ENCODE measurements at regions of chr6 and their contacts with region 1.

Region 1: GRCh38 chr6:71717035-71717434 is 169.3 kb upstream of the RIMS1 start:
- DNase-seq: no peak
- H3K4me3 ChIP-seq: no peak overlapping the region
- H3K27ac ChIP-seq: no peak overlapping the region
- H3K4me1 ChIP-seq: no peaks in the 10 kb centered on the region
- H3K27me3 ChIP-seq: no peaks in the 10 kb centered on the region
- CTCF ChIP-seq: no peak

Region 2: DNA sequence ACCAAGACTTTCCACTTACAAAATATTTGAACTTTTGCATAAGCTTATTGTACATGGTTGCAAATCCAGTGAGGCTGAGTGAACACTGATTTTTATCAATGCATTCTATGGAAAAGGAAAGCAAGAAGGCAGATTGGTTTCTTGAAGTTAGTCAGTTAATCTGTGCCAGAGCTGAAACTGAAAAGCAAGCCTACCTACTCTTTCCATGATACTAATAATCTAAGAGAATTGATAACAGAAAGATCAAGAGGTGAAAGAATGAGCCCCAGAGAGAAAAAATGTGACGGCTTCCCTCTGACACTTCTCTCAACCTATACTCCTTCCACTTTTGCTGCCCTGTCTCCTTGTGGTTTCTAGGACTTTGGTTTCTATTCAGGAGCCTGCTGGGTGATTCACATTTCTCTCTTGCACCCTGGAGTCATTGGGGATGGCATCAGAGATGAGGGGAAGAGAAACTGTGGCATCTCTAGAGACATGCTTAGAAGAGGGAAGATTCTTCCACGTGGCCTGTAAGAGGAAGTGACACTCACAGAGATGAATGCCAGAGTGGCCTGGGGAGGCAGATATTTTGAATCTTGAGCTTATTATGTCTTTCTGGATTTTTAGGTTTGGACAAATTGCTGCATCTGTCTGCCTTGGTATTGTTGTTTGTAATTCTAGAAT is 10.7 kb after region 1 on chr6:
- CTCF ChIA-PET with region 1: no interaction called
- POLR2A ChIA-PET with region 1: interaction called, 14 read pairs
- intact Hi-C with region 1: no loop called
- DNase-seq: no peak
- H3K4me3 ChIP-seq: no peak overlapping the region
- H3K27ac ChIP-seq: no peak overlapping the region
- H3K4me1 ChIP-seq: no peaks in the 10 kb centered on the region
- H3K27me3 ChIP-seq: no peaks in the 10 kb centered on the region
- CTCF ChIP-seq: no peak

Region 3: DNA sequence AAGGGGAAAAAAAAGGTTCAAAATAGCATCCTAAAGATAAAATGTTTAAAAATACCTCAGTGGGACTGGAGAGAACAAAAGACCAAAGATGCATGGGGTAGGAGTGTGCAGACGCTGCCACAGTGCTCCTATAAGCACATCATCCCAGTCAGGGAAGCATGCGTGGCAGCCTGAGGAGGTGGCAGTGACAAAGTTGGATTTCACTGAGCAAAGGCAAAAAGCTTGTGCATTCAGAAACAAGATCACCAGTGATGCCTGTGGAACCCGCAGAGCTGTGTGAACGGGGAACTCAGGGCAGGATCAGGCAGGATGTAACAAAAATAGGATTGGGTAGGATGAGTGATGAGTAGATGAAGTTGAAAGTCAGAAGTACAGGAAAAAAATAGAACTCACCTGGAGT is 285.4 kb after region 1 on chr6:
- CTCF ChIA-PET with region 1: no interaction called
- POLR2A ChIA-PET with region 1: no interaction called
- intact Hi-C with region 1: no loop called
- DNase-seq: no peak
- H3K4me3 ChIP-seq: no peak overlapping the region
- H3K27ac ChIP-seq: no peak overlapping the region
- H3K4me1 ChIP-seq: no peaks in the 10 kb centered on the region
- H3K27me3 ChIP-seq: no peaks in the 10 kb centered on the region
- CTCF ChIP-seq: no peak

Measured in PC-9 (cell line).